Transverse colon (tissue), 4 donors: ENCODE measurements at regions of chr19 and their contacts with region 1.

Region 1: DNA sequence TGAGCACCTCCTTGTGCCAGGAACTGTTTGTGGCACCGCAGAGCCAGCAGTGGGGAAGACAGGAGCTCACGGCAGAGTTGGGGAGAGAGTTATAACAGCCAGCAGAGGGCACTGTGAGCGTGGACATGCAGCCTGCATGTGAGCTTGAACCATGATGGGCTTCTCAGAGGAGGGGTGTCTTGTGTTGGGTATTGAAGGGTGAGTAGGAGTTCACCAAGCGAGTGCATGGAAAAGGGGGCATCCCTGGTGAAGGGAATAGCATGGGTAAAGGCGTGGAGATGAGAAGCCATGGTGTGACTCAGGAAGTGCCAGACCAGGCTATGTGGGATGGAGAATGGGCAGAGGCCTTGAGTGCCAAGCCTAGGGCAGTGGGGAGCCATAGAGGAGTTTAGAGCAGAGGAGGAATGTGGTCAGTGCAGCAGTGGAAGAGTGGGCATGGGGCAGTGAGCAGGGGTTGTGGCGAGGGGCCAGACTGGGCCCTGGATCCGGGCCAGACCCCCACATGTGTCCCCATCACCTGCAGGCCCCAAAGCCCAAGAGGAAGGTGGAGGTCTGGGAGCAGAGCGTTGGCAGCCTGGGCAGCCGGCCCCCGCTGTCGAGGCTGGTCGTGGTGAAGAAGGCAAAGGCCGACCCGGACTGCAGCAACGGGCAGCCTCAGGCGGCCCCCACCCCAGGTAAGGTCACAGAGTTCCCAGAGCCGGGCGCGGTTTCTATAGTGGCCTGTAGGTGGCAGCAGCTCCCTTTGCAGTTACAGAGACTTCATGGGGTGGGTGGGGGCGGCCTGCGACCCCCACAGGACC is 11.8 kb upstream of the SHD start:
- DNase-seq: peak; percentile 68
- H3K4me3 ChIP-seq: no peak overlapping the region
- H3K27ac ChIP-seq: peak overlapping the region; percentile 61 to 79 (median 72)
- H3K4me1 ChIP-seq: peaks cover 0 to 14% (median 8%) of the 10 kb centered on the region in 4 donors
- H3K27me3 ChIP-seq: no peaks in the 10 kb centered on the region
- CTCF ChIP-seq: peak; percentile 81 to 88 (median 84)
- EP300 ChIP-seq: no peak
- POLR2A ChIP-seq: no peak

Region 2: DNA sequence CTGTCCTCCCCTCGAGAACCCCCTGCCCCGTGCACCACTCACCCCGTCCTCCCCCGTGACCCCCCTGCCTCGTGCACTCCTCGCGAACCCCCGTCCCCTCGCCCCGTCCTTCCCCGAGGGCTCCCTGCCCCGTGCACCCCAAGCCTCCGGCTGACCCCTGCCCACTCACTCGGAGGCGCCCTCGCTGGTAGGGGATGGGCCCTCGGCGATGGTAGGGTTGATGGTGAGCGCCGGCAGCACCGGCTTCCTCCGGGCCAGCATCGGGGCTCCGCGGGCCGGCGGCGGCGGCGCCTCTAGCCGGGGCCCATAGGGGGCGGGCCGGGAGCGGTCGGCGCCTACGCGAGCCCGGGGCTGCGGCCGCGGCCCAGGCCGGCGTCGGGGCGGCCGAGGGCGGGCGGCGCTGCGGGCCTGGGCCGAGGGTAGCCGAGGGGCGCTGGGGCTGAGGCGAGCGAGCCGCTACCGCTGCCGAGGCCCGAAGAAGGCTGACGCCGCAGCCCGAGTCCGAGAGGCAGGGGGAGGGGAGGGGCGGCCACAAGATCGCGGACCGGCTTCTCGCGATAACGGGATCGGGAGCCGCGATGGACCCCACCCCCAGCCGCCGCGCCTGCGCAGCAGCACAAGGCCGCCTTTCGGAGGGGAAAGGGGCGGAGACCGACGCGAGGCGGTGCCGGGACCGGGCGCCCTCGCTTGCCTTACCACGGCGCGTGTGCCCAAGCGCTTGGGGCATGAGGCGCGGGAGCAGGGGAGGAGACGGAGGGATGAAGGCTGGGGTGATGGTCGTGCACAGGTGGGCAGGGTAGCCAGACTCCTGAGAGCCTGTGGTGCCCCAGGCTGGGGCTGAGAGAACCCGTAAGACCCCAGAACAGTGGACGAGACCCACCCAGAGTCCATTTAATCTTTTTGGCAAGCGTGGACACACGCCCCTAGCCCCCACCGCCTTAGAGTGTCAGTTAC is 143.4 kb before region 1 on chr19 and contains the start of gene MAP2K2:
- in situ Hi-C with region 1: no loop called
- intact Hi-C with region 1: no loop called
- DNase-seq: peak; percentile 96
- H3K4me3 ChIP-seq: peak within 1 kb of the TSS; percentile 71 to 94 (median 84)
- H3K27ac ChIP-seq: peak within 1 kb of the TSS; percentile 72 to 92 (median 84)
- H3K4me1 ChIP-seq: peaks cover 18 to 35% (median 29%) of the 10 kb centered on the region in 4 donors
- H3K27me3 ChIP-seq: no peaks in the 10 kb centered on the region
- CTCF ChIP-seq: peak in 3 of 5 experiments; percentile 8 to 25 (median 20)
- EP300 ChIP-seq: no peak
- POLR2A ChIP-seq: peak; percentile 74
- total RNA-seq, gene MAP2K2: 136 to 199 (median 195) TPM

Region 3: GRCh38 chr19:4352701-4353121 is 85.4 kb after region 1 on chr19:
- in situ Hi-C with region 1: loop called in 3 of 4 experiments (anchors 10 to 25 kb)
- intact Hi-C with region 1: loop called (anchors 10 kb)
- DNase-seq: no peak
- H3K4me3 ChIP-seq: no peak overlapping the region
- H3K27ac ChIP-seq: no peak overlapping the region
- H3K4me1 ChIP-seq: no peaks in the 10 kb centered on the region
- H3K27me3 ChIP-seq: no peaks in the 10 kb centered on the region
- CTCF ChIP-seq: peak; percentile 83 to 95 (median 93)
- EP300 ChIP-seq: no peak
- POLR2A ChIP-seq: no peak

Region 4: DNA sequence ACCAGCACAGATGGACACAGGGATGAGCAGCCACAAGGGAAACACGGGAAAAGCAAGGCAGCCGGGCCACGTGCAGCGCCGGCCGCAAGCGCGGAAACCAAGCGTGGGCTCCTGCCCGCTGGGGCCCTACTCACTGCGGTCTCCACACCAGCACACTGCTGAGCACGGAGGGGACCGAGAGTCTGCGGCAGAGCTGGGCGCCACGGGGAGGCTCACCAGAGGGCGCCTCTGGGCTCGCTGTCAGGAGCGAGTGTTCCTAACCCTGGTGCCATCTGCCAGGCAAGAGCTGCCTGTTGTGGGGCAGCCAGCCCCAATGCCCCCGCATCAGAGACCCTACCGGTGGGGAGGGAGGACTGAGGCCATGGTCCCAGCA is 102.6 kb after region 1 on chr19:
- in situ Hi-C with region 1: loop called in 1 of 4 experiments (anchors 25 kb)
- intact Hi-C with region 1: no loop called
- DNase-seq: peak; percentile 76
- H3K4me3 ChIP-seq: peak overlapping the region in 2 of 4 donors; percentile 17 to 27
- H3K27ac ChIP-seq: peak overlapping the region; percentile 65 to 82 (median 77)
- H3K4me1 ChIP-seq: peaks cover 44 to 62% (median 55%) of the 10 kb centered on the region in 4 donors
- H3K27me3 ChIP-seq: no peaks in the 10 kb centered on the region
- CTCF ChIP-seq: peak; percentile 9 to 36 (median 25)
- EP300 ChIP-seq: no peak
- POLR2A ChIP-seq: no peak